ENCODE measurements at regions of chr5 and their contacts with region 1.

Region 1: DNA sequence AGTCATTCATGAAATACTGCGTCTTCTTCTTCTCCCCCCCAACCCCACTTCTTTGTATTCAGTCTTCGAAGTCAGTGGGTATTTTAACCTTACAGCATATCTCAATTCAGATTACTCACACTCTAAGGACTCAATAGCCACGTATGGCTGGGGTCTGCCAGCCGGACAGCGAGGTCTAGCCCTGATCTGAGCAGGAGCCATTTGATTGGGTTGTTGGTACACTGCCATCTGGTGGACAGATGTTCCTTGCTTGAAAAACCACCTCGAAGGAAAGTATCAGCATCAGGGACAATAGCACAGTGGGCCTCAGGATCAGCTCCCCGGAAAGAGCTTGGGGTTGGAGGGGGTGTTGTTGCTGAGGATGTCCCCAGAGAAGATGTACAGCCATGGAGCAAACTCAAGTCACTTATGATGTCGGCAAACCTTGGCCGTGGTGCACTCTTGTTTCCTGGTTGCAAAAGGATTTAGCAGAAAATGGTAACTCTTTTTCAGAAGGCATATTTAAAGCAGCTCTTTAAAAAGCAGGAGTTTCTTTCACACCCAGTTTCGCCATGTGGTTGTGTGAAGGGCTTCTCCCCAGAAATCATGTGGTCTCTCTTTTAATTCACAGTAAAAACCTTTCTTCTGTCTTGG is 31.7 kb upstream of the KCNMB1 start:
- DNase-seq: no peak
- ATAC-seq: peak; percentile 71

Region 2: DNA sequence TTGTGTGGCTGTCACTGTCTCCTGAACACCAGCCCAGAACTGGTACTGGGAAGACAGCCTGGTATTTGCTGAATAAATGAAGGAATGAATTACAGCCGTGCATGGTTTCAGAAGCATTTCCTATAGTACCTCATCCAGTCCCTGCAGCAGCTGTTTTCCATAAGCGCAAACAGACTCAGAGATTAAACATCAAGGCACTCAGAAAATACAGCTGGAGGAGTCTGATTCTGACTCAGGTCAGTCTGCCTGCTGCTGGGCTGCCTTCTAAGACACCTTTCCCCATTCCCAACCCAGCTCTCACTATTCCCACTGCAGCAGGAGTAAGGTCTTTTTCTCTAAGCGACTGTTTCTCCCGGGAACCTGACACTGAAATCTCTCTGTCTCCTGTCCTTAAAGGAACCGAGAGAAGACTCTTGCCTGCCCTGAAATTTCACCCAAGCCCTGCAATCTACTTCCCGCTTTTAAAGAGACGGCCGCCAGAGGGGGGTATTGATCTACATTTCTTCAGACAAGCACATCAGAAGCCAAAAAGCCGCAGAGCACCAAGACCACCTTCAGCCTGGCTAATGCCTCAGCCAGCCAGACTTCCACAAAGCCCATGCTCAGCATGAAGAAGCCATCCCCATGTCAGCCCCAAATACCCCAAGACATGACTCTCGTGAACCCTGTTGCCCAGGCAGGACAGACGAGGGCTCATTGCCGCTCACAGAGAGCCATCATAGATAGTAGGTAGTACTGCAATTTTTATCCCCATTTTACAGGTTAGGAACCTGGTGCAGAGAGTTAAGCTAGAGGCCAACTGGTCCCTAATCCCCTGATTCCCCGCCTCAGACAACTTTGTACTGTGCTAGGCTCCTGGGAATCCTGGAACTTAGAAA is 320.6 kb before region 1 on chr5:
- intact Hi-C with region 1: loop called (anchors 10 kb)
- DNase-seq: no peak
- ATAC-seq: peak; percentile 65

Region 3: GRCh38 chr5:170225326-170226128 is 195.4 kb before region 1 on chr5:
- intact Hi-C with region 1: loop called (anchors 1 kb)
- DNase-seq: peak; percentile 82
- ATAC-seq: peak; percentile 80

Region 4: DNA sequence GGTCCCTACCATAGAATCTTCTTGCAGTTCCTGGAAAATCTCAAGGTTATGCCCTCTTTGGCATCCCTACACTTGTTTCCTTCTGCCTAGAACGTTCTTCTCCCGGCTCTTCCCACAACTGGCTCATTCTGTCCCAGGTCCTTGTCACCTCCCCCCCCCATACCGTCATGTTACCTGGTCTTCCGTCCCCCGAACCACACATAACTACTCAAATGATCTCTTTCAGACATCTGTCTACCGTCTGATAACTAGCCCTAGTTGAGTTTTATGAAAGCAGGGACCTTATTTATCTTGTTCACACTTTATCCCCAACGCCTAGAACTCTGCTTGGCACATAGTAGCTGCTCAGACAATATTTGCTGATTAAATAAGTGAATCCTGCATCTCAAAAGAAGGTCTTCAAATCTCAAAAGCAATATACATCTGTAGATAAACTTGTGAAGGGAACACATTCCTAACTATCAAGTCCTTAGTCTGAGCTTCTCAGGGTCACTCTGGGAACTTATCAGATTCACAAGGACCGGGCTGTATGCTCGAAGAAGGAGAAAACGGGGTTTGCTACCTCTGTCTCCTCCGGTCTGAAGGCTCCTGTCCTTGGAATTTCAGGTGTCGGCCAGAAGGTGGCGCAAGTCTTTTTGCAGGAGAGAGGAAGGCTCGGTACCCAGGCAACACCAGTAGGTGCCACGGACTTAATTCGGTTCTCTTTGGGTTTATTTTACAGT is 153.3 kb before region 1 on chr5:
- intact Hi-C with region 1: loop called (anchors 1 kb)
- DNase-seq: peak; percentile 86
- ATAC-seq: peak; percentile 63

Region 5: GRCh38 chr5:170360709-170361108 is 60.2 kb before region 1 on chr5:
- intact Hi-C with region 1: loop called (anchors 10 kb)
- DNase-seq: no peak
- ATAC-seq: peak; percentile 32

Measured in Right ventricle myocardium inferior (tissue), 1 donor.